ENCODE measurements at regions of chr19 and their contacts with region 1.

Region 1: DNA sequence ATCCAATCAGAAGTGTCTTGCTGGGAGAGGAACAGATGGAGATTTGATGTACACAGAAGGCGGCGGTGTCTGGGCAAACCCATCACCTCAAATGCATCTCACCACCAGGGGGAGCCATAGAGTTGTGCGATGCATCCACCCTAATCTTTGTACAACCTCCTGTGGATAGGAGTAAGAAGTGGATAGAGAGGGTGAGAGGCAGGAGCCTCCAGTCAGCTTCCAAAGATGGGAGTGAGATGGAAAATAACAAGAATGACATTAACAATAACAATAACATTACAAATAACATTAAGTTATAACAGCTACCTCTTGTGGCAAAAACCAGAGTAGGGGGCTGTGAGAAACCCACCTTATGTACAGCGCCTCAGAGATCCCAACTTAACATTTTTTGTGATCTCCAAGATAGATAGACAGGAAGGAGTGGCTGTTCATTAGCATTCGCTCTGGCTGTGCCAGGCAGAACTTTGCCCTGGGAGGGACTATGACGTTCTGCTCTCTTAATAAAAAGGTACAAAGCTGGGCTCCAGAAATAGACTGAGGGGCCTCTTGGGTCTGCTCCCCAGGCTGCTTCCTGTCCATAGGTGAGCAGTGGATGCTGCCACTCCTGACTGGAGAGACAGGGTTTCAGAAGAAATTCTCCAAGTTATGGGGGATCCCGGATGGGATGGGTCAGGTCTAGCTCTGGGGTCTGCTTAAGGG is 5.2 kb upstream of the CEACAM18 start:
- DNase-seq: peak; percentile 86 to 87
- H3K4me3 ChIP-seq: no peak overlapping the region
- H3K27ac ChIP-seq: peak overlapping the region in 1 of 5 donors; percentile 27
- H3K4me1 ChIP-seq: peaks cover 0 to 16% (median 0%) of the 10 kb centered on the region in 4 donors
- H3K27me3 ChIP-seq: peaks cover 0 to 43% (median 8%) of the 10 kb centered on the region in 3 donors
- CTCF ChIP-seq: peak in 5 of 7 experiments; percentile 58 to 92 (median 75)
- EP300 ChIP-seq: no peak
- POLR2A ChIP-seq: no peak

Region 2: GRCh38 chr19:51431124-51431523 is 42.0 kb before region 1 on chr19:
- intact Hi-C with region 1: no loop called
- DNase-seq: no peak
- H3K4me3 ChIP-seq: no peak overlapping the region
- H3K27ac ChIP-seq: peak overlapping the region in 2 of 5 donors; percentile 27 to 42
- H3K4me1 ChIP-seq: no peaks in the 10 kb centered on the region
- H3K27me3 ChIP-seq: peaks cover 0 to 21% (median 0%) of the 10 kb centered on the region in 3 donors
- CTCF ChIP-seq: no peak
- EP300 ChIP-seq: no peak
- POLR2A ChIP-seq: no peak

Region 3: GRCh38 chr19:51546650-51547396 is 73.7 kb after region 1 on chr19:
- intact Hi-C with region 1: no loop called
- DNase-seq: peak in 1 of 2 donors; percentile 15
- H3K4me3 ChIP-seq: no peak overlapping the region
- H3K27ac ChIP-seq: no peak overlapping the region
- H3K4me1 ChIP-seq: no peaks in the 10 kb centered on the region
- H3K27me3 ChIP-seq: peaks cover 0 to 85% (median 14%) of the 10 kb centered on the region in 3 donors
- CTCF ChIP-seq: no peak
- EP300 ChIP-seq: no peak
- POLR2A ChIP-seq: no peak

Region 4: GRCh38 chr19:51654783-51655182 is 181.6 kb after region 1 on chr19:
- intact Hi-C with region 1: loop called (anchors 5 kb)
- DNase-seq: no peak
- H3K4me3 ChIP-seq: no peak overlapping the region
- H3K27ac ChIP-seq: no peak overlapping the region
- H3K4me1 ChIP-seq: peaks cover 0 to 8% (median 6%) of the 10 kb centered on the region in 4 donors
- H3K27me3 ChIP-seq: peaks cover 0 to 20% (median 0%) of the 10 kb centered on the region in 3 donors
- CTCF ChIP-seq: no peak
- EP300 ChIP-seq: no peak
- POLR2A ChIP-seq: no peak

Region 5: DNA sequence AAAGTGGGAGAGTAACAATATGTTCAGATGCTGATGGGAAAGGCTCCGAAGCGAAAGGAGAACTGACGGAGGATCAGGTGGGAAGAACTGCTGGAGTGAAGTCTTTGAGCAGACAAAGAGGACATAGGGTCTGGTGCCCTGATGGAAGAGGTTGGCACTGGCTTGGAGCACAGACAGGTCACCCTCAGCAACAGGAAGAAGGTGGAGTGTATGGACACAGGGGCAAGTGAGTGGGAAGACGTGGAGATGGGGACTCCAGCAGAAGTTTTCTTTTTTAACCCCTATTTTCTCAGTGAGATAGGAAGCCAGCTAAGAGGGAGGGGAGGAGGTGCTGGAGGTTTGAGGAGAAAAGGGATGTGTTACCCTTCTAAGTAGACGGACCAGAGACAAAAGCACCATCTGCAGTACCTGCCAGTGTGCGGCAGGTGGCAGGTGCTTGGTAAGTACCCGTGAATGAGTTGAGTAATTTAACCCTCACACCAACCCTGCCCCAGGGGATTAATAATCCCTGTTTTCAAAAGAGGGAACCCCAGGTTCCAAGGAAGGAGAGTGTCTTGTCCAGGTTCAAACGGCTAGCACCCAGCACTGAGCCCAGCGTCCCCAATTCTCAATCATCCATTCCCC is 239.4 kb after region 1 on chr19:
- intact Hi-C with region 1: no loop called
- DNase-seq: peak in 1 of 2 donors; percentile 60
- H3K4me3 ChIP-seq: no peak overlapping the region
- H3K27ac ChIP-seq: no peak overlapping the region
- H3K4me1 ChIP-seq: no peaks in the 10 kb centered on the region
- H3K27me3 ChIP-seq: peaks cover 0 to 19% (median 0%) of the 10 kb centered on the region in 3 donors
- CTCF ChIP-seq: peak in 2 of 7 experiments; percentile 21 to 39
- EP300 ChIP-seq: no peak
- POLR2A ChIP-seq: no peak